PC-9 (cell line): ENCODE measurements at regions of chr12 and their contacts with region 1.

Region 1: DNA sequence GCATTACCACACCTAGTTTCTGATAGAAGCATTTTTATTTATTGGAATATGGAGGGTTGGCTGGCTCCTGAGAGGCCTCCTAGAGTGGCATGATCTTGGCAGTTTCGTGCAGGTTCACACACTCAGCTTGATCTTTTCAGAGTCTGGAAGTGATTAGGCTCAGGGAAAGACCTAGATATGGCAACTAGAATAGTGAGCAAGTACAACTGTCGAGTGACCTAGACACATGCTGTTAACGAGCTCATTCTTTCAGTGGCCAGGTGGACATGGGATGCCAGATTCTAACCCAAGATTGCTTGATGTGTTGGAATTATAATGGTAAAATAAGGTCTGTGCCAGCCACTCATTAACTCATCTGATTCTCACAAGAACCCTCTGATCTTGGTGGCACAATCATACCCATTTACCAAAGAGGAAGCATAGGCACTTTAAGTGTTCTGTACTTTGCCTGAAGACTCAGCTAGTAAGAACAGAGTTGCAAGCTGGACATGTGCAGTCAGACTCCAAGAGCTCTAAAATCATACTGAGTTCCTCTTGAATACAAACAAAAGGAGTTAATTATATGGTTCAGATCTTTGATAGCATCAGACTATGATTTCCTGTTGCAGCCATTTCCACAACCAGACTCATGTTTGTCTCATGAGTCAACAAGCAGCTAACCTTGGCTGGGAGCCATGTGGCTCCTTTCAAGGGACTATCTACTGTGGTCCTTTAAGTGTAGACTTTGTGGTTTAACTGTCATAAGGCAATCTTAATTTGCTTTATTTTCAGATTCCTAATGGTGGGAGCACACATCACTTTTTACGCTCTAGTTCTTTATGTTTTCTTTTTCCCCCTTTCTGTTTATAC is 144.2 kb downstream of the PLEKHA5 start:
- DNase-seq: peak; percentile 91 to 94
- H3K4me3 ChIP-seq: no peak overlapping the region
- H3K27ac ChIP-seq: peak overlapping the region; percentile 55
- H3K4me1 ChIP-seq: peaks cover 23% of the 10 kb centered on the region
- H3K27me3 ChIP-seq: no peaks in the 10 kb centered on the region
- CTCF ChIP-seq: no peak

Region 2: GRCh38 chr12:18861287-18861858 is 412.3 kb before region 1 on chr12:
- CTCF ChIA-PET with region 1: no interaction called
- POLR2A ChIA-PET with region 1: no interaction called
- intact Hi-C with region 1: loop called (anchors 5 kb)
- DNase-seq: no peak
- H3K4me3 ChIP-seq: no peak overlapping the region
- H3K27ac ChIP-seq: no peak overlapping the region
- H3K4me1 ChIP-seq: no peaks in the 10 kb centered on the region
- H3K27me3 ChIP-seq: no peaks in the 10 kb centered on the region
- CTCF ChIP-seq: peak; percentile 82

Region 3: GRCh38 chr12:19369691-19370148 is 96.0 kb after region 1 on chr12:
- CTCF ChIA-PET with region 1: no interaction called
- POLR2A ChIA-PET with region 1: no interaction called
- intact Hi-C with region 1: no loop called
- DNase-seq: no peak
- H3K4me3 ChIP-seq: no peak overlapping the region
- H3K27ac ChIP-seq: no peak overlapping the region
- H3K4me1 ChIP-seq: no peaks in the 10 kb centered on the region
- H3K27me3 ChIP-seq: no peaks in the 10 kb centered on the region
- CTCF ChIP-seq: no peak